Astrocyte of the cerebellum (primary cell): ENCODE measurements at regions of chr16 and their contacts with region 1.

Region 1: DNA sequence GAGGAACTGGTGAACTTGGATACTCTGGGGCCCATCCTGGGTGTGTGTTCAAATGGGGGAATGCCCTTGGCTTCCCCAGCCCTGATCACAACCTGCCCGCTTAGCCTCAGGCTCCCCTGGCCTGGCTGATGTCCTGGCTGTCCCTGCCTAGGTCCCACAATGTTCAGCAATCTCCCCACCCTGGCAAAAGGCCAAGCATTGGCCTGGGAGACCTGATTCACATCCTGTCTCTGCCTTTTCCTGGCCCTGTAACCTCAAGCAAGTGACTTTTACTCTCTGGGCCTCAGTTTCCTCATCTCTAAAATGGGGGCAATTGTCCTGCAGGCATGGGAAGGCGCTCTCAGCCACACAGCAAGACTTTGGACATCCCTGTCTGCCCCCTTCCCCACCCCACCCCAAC is 14.4 kb downstream of the CPNE2 start:
- DNase-seq: no peak
- H3K4me3 ChIP-seq: no peak overlapping the region
- CTCF ChIP-seq: no peak

Region 2: DNA sequence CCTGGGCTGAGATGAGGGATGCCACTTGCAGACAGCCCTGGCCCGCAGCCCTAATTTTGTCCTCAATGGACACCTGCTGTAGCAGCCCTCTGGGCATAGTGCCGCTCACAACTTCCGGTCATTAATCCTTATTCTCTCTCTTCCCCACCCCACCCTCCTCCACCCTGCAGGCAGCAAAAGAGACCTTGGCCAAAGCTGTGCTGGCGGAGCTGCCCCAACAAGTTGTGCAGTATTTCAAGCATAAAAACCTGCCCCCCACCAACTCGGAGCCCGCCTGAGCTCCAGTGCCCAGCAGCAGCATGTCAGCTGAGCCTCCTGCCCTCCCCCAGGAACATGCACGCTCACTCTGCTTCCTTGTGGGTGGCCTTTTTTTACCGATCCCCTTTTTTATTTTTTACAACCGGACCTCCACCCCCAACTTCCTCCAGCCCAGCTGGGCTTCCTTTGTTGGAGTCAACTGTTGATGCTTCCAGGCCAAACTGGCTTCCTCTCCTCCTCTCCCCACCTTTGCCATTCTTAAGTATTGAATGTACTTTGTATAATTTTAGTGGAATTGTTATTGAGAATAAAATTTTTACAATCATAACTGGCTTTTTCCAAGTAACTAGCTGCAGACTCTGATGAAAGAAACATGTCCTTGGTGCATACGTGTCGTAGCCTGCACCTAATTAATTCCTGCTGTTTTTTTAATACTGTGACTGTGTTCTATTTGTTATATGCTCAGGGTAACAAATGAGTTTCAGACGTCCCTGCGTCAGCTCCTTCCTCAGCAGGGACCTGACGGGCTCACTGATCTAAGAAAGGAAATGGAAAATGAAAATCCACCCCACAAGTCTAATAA is 40.8 kb after region 1 on chr16:
- in situ Hi-C with region 1: loop called (anchors 5 kb)
- DNase-seq: no peak
- H3K4me3 ChIP-seq: no peak overlapping the region
- CTCF ChIP-seq: no peak

Region 3: DNA sequence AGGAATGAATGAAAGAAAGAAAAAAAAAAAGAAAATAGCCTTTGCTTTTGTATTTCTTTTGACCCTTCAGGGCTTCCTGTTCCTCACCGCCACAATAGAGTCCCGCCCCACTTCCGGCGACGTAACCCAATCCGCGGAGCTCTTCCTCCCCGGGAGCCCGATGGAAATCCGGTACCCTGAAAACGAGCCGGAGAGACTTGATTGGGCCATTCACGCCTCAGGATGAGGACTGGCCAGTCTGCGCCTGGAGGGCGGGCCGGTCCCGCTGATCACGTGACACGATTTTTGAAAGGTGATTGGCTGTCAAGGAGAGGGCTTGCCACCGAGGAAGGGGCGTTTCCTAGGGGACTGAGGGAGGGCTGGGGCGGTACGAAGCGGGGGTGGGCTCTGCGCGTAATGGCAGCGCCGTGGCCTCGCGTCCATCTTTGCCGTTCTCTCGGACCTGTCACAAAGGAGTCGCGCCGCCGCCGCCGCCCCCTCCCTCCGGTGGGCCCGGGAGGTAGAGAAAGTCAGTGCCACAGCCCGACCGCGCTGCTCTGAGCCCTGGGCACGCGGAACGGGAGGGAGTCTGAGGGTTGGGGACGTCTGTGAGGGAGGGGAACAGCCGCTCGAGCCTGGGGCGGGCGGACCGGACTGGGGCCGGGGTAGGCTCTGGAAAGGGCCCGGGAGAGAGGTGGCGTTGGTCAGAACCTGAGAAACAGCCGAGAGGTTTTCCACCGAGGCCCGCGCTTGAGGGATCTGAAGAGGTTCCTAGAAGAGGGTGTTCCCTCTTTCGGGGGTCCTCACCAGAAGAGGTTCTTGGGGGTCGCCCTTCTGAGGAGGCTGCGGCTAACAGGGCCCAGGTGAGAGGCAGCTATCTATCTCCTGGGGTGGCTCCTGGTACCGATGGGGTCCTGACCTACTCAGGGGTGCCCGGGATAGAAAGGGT is 79.4 kb after region 1 on chr16 and contains the starts of genes PSME3IP1 and RSPRY1:
- in situ Hi-C with region 1: no loop called
- DNase-seq: peak; percentile 99
- H3K4me3 ChIP-seq: peak within 1 kb of the TSS; percentile 82
- CTCF ChIP-seq: no peak

Region 4: DNA sequence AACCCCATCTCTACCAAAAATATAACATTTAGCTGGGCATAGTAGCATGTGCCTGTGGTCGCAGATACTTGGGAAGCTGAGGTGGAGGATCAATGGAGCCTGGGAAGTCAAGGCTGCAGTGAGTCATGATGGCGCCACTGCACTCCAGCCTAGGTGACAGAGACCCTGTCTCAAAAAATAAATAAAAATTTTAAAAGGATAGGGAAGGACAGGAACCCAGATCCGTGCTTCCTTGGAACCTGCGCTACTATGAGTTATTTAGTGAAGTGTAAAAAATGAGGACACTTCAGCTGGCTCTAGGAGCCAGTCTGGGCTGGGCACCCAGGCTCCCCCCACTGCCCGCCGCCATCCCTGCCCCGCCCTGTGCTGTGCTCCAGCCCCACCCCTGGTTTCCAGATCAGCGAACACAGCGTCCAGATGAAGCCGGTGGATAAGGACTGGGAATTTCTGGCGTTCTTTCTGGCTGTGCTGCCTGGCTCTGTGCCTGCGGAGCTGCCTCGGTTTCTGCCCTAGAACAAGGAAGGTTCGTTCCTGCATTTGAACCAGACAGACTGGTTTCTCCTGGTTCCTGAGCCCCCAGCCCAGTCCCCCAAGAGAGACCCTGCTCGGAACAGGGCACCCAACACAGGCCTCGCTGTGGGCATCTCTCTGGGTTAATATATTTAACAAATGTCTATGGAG is 159.2 kb after region 1 on chr16:
- in situ Hi-C with region 1: no loop called
- DNase-seq: peak; percentile 26
- H3K4me3 ChIP-seq: no peak overlapping the region
- CTCF ChIP-seq: no peak